ENCODE measurements at regions of chr16 and their contacts with region 1.

Region 1: DNA sequence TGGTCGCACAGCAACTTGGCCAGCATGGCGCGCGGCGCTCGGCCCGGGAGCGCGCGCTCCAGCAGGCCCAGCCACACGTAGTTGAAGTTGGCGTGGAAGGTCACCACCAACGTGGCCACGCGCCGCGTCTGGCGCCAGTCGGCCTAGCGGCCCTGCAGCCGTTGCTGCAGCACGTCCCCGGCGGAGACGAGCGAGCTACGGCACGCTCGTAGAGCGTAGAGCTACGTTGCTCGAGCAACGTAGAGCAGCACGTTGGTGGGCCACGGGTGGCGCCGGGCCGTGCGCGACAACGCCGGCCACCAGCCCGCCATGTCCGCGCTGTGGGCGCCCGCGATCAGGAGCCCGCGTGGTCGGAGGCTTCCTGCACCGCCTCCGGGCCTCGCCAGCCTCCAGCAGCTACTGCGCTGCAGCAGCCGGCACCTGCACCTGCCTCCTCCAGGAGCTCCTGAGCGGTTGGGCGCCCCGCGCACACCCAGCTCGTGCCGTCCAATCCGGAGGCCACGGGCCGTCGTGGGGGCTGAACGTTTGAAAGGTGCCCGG is 13.4 kb upstream of the SULT1A1 start:
- DNase-seq: peak in 1 of 2 donors; percentile 69
- H3K4me3 ChIP-seq: peak overlapping the region; percentile 32 to 76 (median 64)
- H3K27ac ChIP-seq: peak overlapping the region; percentile 26 to 52
- H3K4me1 ChIP-seq: no peaks in the 10 kb centered on the region
- H3K27me3 ChIP-seq: no peaks in the 10 kb centered on the region
- CTCF ChIP-seq: no peak
- POLR2A ChIP-seq: no peak

Region 2: DNA sequence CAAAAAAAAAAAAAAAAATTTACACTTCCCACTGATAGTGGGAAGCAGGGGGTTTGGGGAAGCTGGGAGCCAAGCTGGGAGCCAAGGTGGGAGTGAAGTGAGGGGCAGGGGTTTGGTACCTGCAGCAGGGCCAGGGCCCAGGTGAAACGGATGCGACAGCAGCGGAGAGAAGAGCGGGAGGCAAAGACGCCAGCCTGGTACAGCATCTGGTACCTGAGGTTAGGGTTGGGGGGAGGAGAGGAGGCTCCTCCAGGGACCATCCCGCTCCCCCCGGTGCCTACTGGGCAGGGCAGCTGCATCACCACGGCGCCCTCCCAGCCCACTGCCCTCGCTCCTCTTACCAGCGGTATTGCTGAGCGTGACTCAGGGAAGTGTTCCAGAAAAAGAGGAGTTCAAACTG is 141.3 kb before region 1 on chr16:
- intact Hi-C with region 1: loop called (anchors 10 kb)
- DNase-seq: no peak
- H3K4me3 ChIP-seq: no peak overlapping the region
- H3K27ac ChIP-seq: no peak overlapping the region
- H3K4me1 ChIP-seq: no peaks in the 10 kb centered on the region
- H3K27me3 ChIP-seq: no peaks in the 10 kb centered on the region
- CTCF ChIP-seq: no peak
- POLR2A ChIP-seq: no peak

Region 3: DNA sequence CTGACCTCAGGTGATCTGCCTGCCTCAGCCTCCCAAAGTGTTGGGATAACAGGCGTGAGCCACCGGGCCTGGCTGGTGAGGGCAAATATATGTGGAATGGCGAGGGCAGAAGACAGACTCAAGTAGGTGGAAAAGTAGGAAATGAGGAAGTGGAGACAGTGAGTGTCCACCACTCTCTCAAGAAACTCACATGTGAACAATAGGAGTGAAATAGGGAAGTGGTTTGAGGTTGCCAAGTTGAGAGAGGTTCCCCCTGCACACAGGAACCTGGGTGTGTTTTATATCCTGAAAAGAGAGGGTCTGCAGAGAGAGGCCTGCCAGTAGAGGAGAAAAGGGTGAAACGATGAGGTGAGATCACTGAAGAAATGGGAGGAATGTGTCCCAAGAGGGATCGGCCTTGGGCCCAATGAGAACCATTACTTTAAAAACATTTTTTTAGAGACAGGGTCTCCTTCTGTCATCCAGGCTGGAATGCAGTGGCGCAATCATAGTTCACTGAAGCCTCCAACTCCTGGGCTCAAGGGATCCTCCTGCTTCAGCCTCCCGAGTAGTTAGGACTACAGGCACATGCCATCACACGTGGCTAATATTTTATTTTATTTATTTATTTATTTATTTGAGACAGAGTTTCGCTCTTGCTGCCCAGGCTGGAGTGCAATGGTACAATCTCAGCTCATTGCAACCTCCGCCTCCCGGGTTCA is 1543.1 kb after region 1 on chr16:
- intact Hi-C with region 1: no loop called
- DNase-seq: no peak
- H3K4me3 ChIP-seq: no peak overlapping the region
- H3K27ac ChIP-seq: no peak overlapping the region
- H3K4me1 ChIP-seq: no peaks in the 10 kb centered on the region
- H3K27me3 ChIP-seq: no peaks in the 10 kb centered on the region
- CTCF ChIP-seq: no peak
- POLR2A ChIP-seq: no peak